Cardiac septum (tissue), 1 donor: ENCODE measurements at regions of chr7 and their contacts with region 1.

Region 1: DNA sequence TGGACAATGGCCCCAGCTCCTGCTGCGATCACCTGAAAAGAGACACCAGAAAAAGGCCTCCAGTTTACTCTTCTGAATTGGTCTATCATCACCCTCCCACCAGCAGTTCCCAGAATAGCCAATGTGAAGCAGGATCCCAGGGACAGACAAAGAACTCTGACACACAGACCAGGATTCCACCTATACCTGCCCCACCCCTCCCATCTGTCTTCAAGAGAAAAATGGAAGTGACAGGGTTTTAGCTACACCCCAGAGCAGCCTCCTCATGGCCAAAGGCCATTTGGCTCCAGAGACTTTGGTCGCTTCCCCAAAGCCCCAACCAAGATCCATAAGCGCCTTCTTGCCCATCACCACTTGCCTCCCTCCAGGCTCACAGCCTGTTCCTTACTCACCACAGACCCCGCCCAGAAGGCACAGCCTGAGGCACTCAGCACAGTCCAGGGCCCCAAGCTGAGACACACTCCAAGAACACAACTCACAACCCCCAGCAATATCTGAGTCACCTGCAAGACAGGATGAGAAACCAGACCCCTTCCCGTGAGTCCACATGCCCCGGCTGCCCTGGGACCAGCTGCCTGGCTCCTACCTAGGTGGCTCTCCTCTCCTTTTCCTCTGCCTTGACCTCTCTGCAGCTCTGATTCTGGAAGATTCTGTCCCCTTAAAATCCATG is 6.5 kb downstream of the TMEM176B start:
- DNase-seq: no peak

Region 2: GRCh38 chr7:150824379-150825177 is 30.9 kb after region 1 on chr7:
- intact Hi-C with region 1: loop called (anchors 5 kb)
- DNase-seq: no peak